ENCODE measurements at regions of chr11 and their contacts with region 1.

Region 1: DNA sequence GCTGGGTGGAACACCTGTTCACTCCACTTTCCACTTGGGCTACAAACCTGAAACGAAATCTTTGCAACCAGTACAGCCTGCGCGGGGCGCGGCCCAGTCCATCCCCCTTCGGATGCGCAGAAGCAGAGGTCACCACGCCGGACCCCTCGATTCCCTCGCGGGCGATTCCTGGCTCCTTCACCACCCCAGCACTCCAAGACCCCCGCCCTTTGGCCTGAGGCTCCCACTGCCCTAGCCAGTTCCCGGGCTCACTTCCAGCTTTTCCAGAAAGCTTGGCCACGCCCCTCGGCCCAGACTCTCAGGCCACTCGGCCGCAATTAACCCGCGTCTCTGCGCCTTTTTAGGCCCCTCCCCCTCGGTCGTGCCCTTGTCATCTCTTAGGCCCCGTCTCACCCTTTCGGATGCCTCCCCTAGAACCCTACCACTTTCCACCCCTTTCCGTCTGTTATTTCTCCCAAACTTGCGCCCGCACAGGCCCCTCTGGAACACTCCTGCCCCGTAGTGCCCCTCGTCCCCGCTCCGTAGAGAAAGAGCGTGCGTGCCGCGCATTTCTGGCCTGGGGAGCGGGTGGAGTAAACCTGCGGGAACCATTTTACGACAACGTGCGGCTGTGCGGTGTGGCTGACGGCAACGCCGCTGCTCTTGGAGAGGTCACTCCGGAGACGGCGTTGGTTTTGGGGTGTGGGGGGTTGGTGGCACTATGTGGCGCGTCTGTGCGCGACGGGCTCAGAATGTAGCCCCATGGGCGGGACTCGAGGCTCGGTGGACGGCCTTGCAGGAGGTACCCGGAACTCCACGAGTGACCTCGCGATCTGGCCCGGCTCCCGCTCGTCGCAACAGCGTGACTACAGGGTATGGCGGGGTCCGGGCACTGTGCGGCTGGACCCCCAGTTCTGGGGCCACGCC is at the start of gene DLAT:
- DNase-seq: peak; percentile 86
- H3K4me3 Mint-ChIP-seq: peak within 1 kb of the TSS; percentile 99
- H3K27ac Mint-ChIP-seq: peak within 1 kb of the TSS; percentile 99
- H3K4me1 Mint-ChIP-seq: peaks cover 13% of the 10 kb centered on the region
- H3K27me3 Mint-ChIP-seq: no peaks in the 10 kb centered on the region
- total RNA-seq, gene DLAT: 47.2 and 47.3 TPM in 2 replicates

Region 2: GRCh38 chr11:111512296-111513239 is 512.5 kb before region 1 on chr11 and contains the start of gene BTG4:
- intact Hi-C with region 1: no loop called
- DNase-seq: no peak
- H3K4me3 Mint-ChIP-seq: peak within 1 kb of the TSS; percentile 76
- H3K27ac Mint-ChIP-seq: peak within 1 kb of the TSS; percentile 46
- H3K4me1 Mint-ChIP-seq: peaks cover 8% of the 10 kb centered on the region
- H3K27me3 Mint-ChIP-seq: peaks cover 50% of the 10 kb centered on the region
- total RNA-seq, gene BTG4: not detected in 2 replicates

Region 3: GRCh38 chr11:112057170-112057569 is 32.1 kb after region 1 on chr11:
- intact Hi-C with region 1: loop called (anchors 2 kb)
- DNase-seq: no peak
- H3K4me3 Mint-ChIP-seq: peak overlapping the region; percentile 11
- H3K27ac Mint-ChIP-seq: peak overlapping the region; percentile 80
- H3K4me1 Mint-ChIP-seq: peaks cover 21% of the 10 kb centered on the region
- H3K27me3 Mint-ChIP-seq: no peaks in the 10 kb centered on the region

Measured in activated T-helper 2 cell treated with anti-CD3 and anti-CD28 coated beads, Interferon-gamma antibody, Interleukin-2, Interleukin-4, amounts not matched to agents 10 μg/mL and 5 μg/mL and 100 μg/mL, durations not matched to agents 14 hours and 24 hours and 36 hours (primary cell).